ENCODE measurements at regions of chr1 and their contacts with region 1.

Region 1: GRCh38 chr1:41728403-41729202 is 190.1 kb downstream of the HIVEP3 start:
- DNase-seq: peak; percentile 77 to 80
- ATAC-seq: peak; percentile 82 to 92 (median 90)
- H3K4me3 ChIP-seq: no peak overlapping the region
- H3K4me3 Mint-ChIP-seq: peak overlapping the region; percentile 92
- H3K27ac ChIP-seq: peak overlapping the region; percentile 90
- H3K27ac Mint-ChIP-seq: peak overlapping the region; percentile 88 to 93
- H3K4me1 ChIP-seq: peaks cover 61% of the 10 kb centered on the region
- H3K4me1 Mint-ChIP-seq: peaks cover 56 to 70% of the 10 kb centered on the region in 2 donors
- H3K27me3 ChIP-seq: no peaks in the 10 kb centered on the region
- H3K27me3 Mint-ChIP-seq: no peaks in the 10 kb centered on the region
- CTCF ChIP-seq: no peak

Region 2: GRCh38 chr1:41432481-41433280 is 295.9 kb before region 1 on chr1:
- intact Hi-C with region 1: no loop called
- DNase-seq: peak; percentile 72 to 80
- ATAC-seq: peak; percentile 79 to 98 (median 94)
- H3K4me3 ChIP-seq: no peak overlapping the region
- H3K4me3 Mint-ChIP-seq: no peak overlapping the region
- H3K27ac ChIP-seq: no peak overlapping the region
- H3K27ac Mint-ChIP-seq: no peak overlapping the region
- H3K4me1 ChIP-seq: no peaks in the 10 kb centered on the region
- H3K4me1 Mint-ChIP-seq: peaks cover 0 to 6% of the 10 kb centered on the region in 2 donors
- H3K27me3 ChIP-seq: no peaks in the 10 kb centered on the region
- H3K27me3 Mint-ChIP-seq: peaks cover 25 to 41% of the 10 kb centered on the region in 2 donors
- CTCF ChIP-seq: peak; percentile 85

Region 3: GRCh38 chr1:41662061-41662764 is 66.4 kb before region 1 on chr1:
- intact Hi-C with region 1: loop called (anchors 5 kb)
- DNase-seq: peak; percentile 61 to 87
- ATAC-seq: peak; percentile 85 to 93 (median 88)
- H3K4me3 ChIP-seq: peak overlapping the region; percentile 52
- H3K4me3 Mint-ChIP-seq: no peak overlapping the region
- H3K27ac ChIP-seq: peak overlapping the region; percentile 67
- H3K27ac Mint-ChIP-seq: peak overlapping the region in 1 of 2 donors; percentile 79
- H3K4me1 ChIP-seq: peaks cover 52% of the 10 kb centered on the region
- H3K4me1 Mint-ChIP-seq: peaks cover 44 to 56% of the 10 kb centered on the region in 2 donors
- H3K27me3 ChIP-seq: no peaks in the 10 kb centered on the region
- H3K27me3 Mint-ChIP-seq: no peaks in the 10 kb centered on the region
- CTCF ChIP-seq: no peak

Region 4: GRCh38 chr1:41683681-41684500 is 44.7 kb before region 1 on chr1:
- intact Hi-C with region 1: loop called (anchors 5 kb)
- DNase-seq: peak in 1 of 2 donors; percentile 51
- ATAC-seq: peak; percentile 56 to 69 (median 65)
- H3K4me3 ChIP-seq: no peak overlapping the region
- H3K4me3 Mint-ChIP-seq: peak overlapping the region; percentile 78
- H3K27ac ChIP-seq: peak overlapping the region; percentile 42
- H3K27ac Mint-ChIP-seq: peak overlapping the region; percentile 69 to 82
- H3K4me1 ChIP-seq: peaks cover 69% of the 10 kb centered on the region
- H3K4me1 Mint-ChIP-seq: peaks cover 100% of the 10 kb centered on the region in 2 donors
- H3K27me3 ChIP-seq: no peaks in the 10 kb centered on the region
- H3K27me3 Mint-ChIP-seq: no peaks in the 10 kb centered on the region
- CTCF ChIP-seq: no peak

Region 5: GRCh38 chr1:41739061-41739955 is 10.7 kb after region 1 on chr1:
- intact Hi-C with region 1: loop called (anchors 1 kb)
- DNase-seq: peak; percentile 79 to 90
- ATAC-seq: peak; percentile 83 to 92 (median 89)
- H3K4me3 ChIP-seq: peak overlapping the region; percentile 2
- H3K4me3 Mint-ChIP-seq: peak overlapping the region; percentile 78
- H3K27ac ChIP-seq: peak overlapping the region; percentile 65
- H3K27ac Mint-ChIP-seq: peak overlapping the region; percentile 92 to 97
- H3K4me1 ChIP-seq: peaks cover 47% of the 10 kb centered on the region
- H3K4me1 Mint-ChIP-seq: peaks cover 54 to 75% of the 10 kb centered on the region in 2 donors
- H3K27me3 ChIP-seq: no peaks in the 10 kb centered on the region
- H3K27me3 Mint-ChIP-seq: no peaks in the 10 kb centered on the region
- CTCF ChIP-seq: no peak

Region 6: GRCh38 chr1:41783189-41783639 is 54.6 kb after region 1 on chr1:
- intact Hi-C with region 1: no loop called
- DNase-seq: peak in 1 of 2 donors; percentile 13
- ATAC-seq: peak in 1 of 3 donors; percentile 54
- H3K4me3 ChIP-seq: no peak overlapping the region
- H3K4me3 Mint-ChIP-seq: peak overlapping the region; percentile 7
- H3K27ac ChIP-seq: peak overlapping the region; percentile 31
- H3K27ac Mint-ChIP-seq: peak overlapping the region in 1 of 2 donors; percentile 26
- H3K4me1 ChIP-seq: peaks cover 20% of the 10 kb centered on the region
- H3K4me1 Mint-ChIP-seq: peaks cover 47 to 51% of the 10 kb centered on the region in 2 donors
- H3K27me3 ChIP-seq: no peaks in the 10 kb centered on the region
- H3K27me3 Mint-ChIP-seq: no peaks in the 10 kb centered on the region
- CTCF ChIP-seq: no peak

Region 7: GRCh38 chr1:41802532-41803501 is 74.2 kb after region 1 on chr1:
- intact Hi-C with region 1: loop called (anchors 2 kb)
- DNase-seq: peak; percentile 31 to 71
- ATAC-seq: peak; percentile 65 to 86 (median 83)
- H3K4me3 ChIP-seq: no peak overlapping the region
- H3K4me3 Mint-ChIP-seq: peak overlapping the region; percentile 85
- H3K27ac ChIP-seq: peak overlapping the region; percentile 89
- H3K27ac Mint-ChIP-seq: peak overlapping the region; percentile 91 to 99
- H3K4me1 ChIP-seq: peaks cover 89% of the 10 kb centered on the region
- H3K4me1 Mint-ChIP-seq: peaks cover 81 to 87% of the 10 kb centered on the region in 2 donors
- H3K27me3 ChIP-seq: no peaks in the 10 kb centered on the region
- H3K27me3 Mint-ChIP-seq: no peaks in the 10 kb centered on the region
- CTCF ChIP-seq: no peak

Region 8: GRCh38 chr1:41891199-41891896 is 162.7 kb after region 1 on chr1:
- intact Hi-C with region 1: loop called (anchors 2 kb)
- DNase-seq: peak; percentile 62 to 87
- ATAC-seq: peak; percentile 61 to 80 (median 70)
- H3K4me3 ChIP-seq: peak overlapping the region; percentile 36
- H3K4me3 Mint-ChIP-seq: peak overlapping the region; percentile 88
- H3K27ac ChIP-seq: peak overlapping the region; percentile 81
- H3K27ac Mint-ChIP-seq: peak overlapping the region; percentile 90 to 92
- H3K4me1 ChIP-seq: peaks cover 85% of the 10 kb centered on the region
- H3K4me1 Mint-ChIP-seq: peaks cover 80% of the 10 kb centered on the region in 2 donors
- H3K27me3 ChIP-seq: no peaks in the 10 kb centered on the region
- H3K27me3 Mint-ChIP-seq: no peaks in the 10 kb centered on the region
- CTCF ChIP-seq: peak; percentile 27

Region 9: DNA sequence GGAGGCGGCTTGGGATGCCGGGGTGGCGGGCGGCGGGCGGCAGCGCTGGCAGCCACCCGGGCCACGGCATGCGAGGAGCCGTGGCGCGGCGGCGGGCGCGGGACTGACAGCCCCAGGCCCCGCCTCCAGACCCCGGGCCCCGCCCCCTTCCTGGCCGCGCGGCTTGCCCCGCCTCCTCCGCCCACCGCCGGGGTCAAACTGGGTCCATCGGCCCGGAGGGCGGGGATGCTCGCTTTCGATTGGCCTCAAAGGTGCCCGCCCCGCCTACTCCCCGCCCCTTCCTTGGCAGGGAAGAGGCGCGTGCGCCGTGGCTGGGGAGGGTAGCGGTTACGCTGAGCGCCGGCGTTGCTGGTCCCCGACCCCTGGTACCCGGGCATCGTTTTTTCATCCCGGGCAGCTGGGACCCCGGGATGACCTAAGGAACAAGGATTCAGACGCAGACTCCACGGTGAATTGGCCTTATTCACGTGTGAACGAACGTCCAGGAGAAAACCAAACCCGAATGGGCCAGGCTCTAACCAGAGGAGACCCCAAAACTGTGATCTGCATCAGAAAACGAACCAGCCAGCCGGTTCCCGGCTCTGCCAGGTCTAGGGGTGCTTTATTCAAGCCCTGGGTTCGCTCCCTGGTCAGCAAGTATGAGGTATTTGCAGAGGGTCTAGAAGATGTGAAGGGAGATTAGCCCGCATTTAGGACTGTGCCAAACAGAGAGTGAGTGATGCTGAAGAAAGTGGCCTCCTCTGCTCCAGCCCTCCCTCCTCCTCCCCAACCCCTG is 307.4 kb after region 1 on chr1:
- intact Hi-C with region 1: loop called (anchors 1 kb)
- DNase-seq: peak; percentile 97 to 99
- ATAC-seq: peak; percentile 93 to 98 (median 94)
- H3K4me3 ChIP-seq: peak overlapping the region; percentile 49
- H3K4me3 Mint-ChIP-seq: peak overlapping the region; percentile 84
- H3K27ac ChIP-seq: peak overlapping the region; percentile 48
- H3K27ac Mint-ChIP-seq: peak overlapping the region; percentile 29 to 82
- H3K4me1 ChIP-seq: peaks cover 22% of the 10 kb centered on the region
- H3K4me1 Mint-ChIP-seq: peaks cover 40 to 41% of the 10 kb centered on the region in 2 donors
- H3K27me3 ChIP-seq: no peaks in the 10 kb centered on the region
- H3K27me3 Mint-ChIP-seq: no peaks in the 10 kb centered on the region
- CTCF ChIP-seq: no peak

Measured in natural killer cell (primary cell).